IMR-90 (cell line): ENCODE measurements at regions of chr4 and their contacts with region 1.

Region 1: GRCh38 chr4:189124149-189124758 is 816.4 kb upstream of the FRG1 start:
- DNase-seq: peak; percentile 74
- ATAC-seq: peak; percentile 85
- H3K4me3 ChIP-seq: no peak overlapping the region
- H3K27ac ChIP-seq: peak overlapping the region; percentile 43; the same call in 1 of the 2 replicates
- H3K4me1 ChIP-seq: peaks cover 1% of the 10 kb centered on the region; the same call in 1 of the 2 replicates
- H3K27me3 ChIP-seq: no peaks in the 10 kb centered on the region
- CTCF ChIP-seq: peak; percentile 91
- POLR2A ChIP-seq: no peak
- RAD21 ChIP-seq: peak; percentile 97

Region 2: GRCh38 chr4:188767496-188767895 is 356.8 kb before region 1 on chr4:
- CTCF ChIA-PET with region 1: no interaction called
- POLR2A ChIA-PET with region 1: no interaction called
- dilution Hi-C with region 1: no loop called
- in situ Hi-C with region 1: no loop called
- intact Hi-C with region 1: no loop called
- DNase-seq: peak; percentile 34
- ATAC-seq: no peak
- H3K4me3 ChIP-seq: no peak overlapping the region
- H3K27ac ChIP-seq: no peak overlapping the region
- H3K4me1 ChIP-seq: no peaks in the 10 kb centered on the region
- H3K27me3 ChIP-seq: no peaks in the 10 kb centered on the region
- CTCF ChIP-seq: no peak
- POLR2A ChIP-seq: no peak
- RAD21 ChIP-seq: no peak

Region 3: DNA sequence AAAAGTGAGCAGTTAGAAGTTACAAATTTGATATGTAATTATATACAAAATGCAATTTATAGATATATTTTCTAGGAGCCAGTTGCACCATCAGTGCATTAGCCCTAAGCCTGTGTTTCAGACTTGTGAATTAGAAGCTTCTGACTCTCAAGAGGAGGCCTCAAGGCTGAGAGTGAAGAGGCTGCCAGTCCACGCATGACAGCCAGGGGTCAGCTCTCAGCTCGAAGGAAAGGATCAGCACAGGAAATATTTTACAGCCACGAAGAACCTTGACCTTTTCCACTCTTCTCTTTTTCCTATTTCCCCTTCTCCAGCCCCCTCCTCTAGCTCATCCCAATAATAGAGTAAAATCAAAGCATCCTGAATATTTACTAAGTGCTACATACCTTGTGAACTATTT is 342.6 kb before region 1 on chr4:
- CTCF ChIA-PET with region 1: interaction called, 4 read pairs
- POLR2A ChIA-PET with region 1: no interaction called
- dilution Hi-C with region 1: no loop called
- in situ Hi-C with region 1: no loop called
- intact Hi-C with region 1: loop called (anchors 2 kb)
- DNase-seq: peak; percentile 16
- ATAC-seq: peak; percentile 33; the same call in 1 of the 2 replicates
- H3K4me3 ChIP-seq: no peak overlapping the region
- H3K27ac ChIP-seq: no peak overlapping the region
- H3K4me1 ChIP-seq: peaks cover 5% of the 10 kb centered on the region; the same call in 1 of the 2 replicates
- H3K27me3 ChIP-seq: no peaks in the 10 kb centered on the region
- CTCF ChIP-seq: peak; percentile 37
- POLR2A ChIP-seq: no peak
- RAD21 ChIP-seq: 0 out of 2 replicates have a peak, but pooled peaks have one; percentile 14

Region 4: DNA sequence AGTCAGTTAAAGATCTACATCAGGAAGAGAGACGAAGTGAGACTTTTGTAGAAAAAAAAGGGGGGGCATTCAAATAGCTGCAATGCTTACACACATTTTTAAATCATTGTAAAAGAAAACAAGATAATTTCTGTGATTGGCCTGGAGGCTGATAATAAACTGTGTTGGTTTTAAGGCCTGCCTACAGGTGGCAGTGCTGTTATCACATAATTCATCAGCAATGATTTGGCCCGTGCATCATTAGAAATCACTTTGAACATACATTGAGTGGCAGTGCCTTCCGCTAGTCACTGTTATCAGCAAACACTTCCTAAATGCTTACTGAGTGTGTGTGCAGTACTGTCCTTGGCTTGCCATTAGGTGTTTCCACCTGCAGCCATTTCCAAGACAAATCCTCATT is 153.1 kb before region 1 on chr4:
- CTCF ChIA-PET with region 1: interaction called, 5 read pairs
- POLR2A ChIA-PET with region 1: no interaction called
- dilution Hi-C with region 1: no loop called
- in situ Hi-C with region 1: no loop called
- intact Hi-C with region 1: loop called (anchors 2 kb)
- DNase-seq: peak; percentile 28
- ATAC-seq: peak; percentile 70
- H3K4me3 ChIP-seq: no peak overlapping the region
- H3K27ac ChIP-seq: no peak overlapping the region
- H3K4me1 ChIP-seq: peaks cover 3% of the 10 kb centered on the region; the same call in 1 of the 2 replicates
- H3K27me3 ChIP-seq: no peaks in the 10 kb centered on the region
- CTCF ChIP-seq: peak; percentile 53
- POLR2A ChIP-seq: no peak
- RAD21 ChIP-seq: peak; percentile 54

Region 5: GRCh38 chr4:189029976-189030504 is 94.2 kb before region 1 on chr4:
- CTCF ChIA-PET with region 1: no interaction called
- POLR2A ChIA-PET with region 1: no interaction called
- dilution Hi-C with region 1: no loop called
- in situ Hi-C with region 1: no loop called
- intact Hi-C with region 1: no loop called
- DNase-seq: no peak
- ATAC-seq: no peak
- H3K4me3 ChIP-seq: no peak overlapping the region
- H3K27ac ChIP-seq: no peak overlapping the region
- H3K4me1 ChIP-seq: no peaks in the 10 kb centered on the region
- H3K27me3 ChIP-seq: no peaks in the 10 kb centered on the region
- CTCF ChIP-seq: no peak
- POLR2A ChIP-seq: no peak
- RAD21 ChIP-seq: no peak

Region 6: GRCh38 chr4:189073739-189074138 is 50.5 kb before region 1 on chr4:
- CTCF ChIA-PET with region 1: no interaction called
- POLR2A ChIA-PET with region 1: no interaction called
- dilution Hi-C with region 1: no loop called
- in situ Hi-C with region 1: no loop called
- intact Hi-C with region 1: no loop called
- DNase-seq: no peak
- ATAC-seq: no peak
- H3K4me3 ChIP-seq: no peak overlapping the region
- H3K27ac ChIP-seq: no peak overlapping the region
- H3K4me1 ChIP-seq: peaks cover 4% of the 10 kb centered on the region; the same call in 1 of the 2 replicates
- H3K27me3 ChIP-seq: no peaks in the 10 kb centered on the region
- CTCF ChIP-seq: no peak
- POLR2A ChIP-seq: no peak
- RAD21 ChIP-seq: no peak

Region 7: DNA sequence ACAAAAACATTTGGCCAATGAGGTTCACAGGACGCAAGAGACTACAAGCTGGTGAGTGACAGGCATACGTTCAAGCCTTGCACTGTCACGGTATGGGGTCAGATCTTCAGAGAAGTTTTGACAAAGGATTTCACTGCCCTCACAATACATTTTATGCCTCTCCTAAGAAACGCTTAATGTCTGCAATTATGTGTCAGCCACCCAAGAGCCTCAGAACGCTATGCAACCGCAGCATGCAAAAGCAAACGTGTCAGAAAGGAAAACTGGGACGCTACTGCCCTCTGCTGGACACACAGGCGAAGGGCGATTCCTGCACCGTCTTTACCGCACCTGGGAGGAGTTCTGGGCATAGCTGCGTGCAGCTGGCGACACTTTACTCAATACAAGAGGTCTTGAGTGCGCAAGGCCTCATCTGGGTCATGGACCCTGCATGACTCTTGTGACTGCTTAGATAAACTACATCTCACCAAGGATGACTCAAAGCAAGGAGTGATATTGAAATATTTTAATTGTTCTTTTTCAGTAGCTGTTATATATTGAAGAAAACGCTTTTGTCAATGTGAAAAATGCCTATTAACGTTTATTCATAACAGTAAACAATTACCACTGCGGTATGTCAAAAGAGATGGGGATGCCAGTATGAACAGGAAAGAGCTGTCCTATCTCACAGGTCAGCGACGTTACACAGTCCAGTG is 668.8 kb after region 1 on chr4:
- CTCF ChIA-PET with region 1: no interaction called
- POLR2A ChIA-PET with region 1: no interaction called
- dilution Hi-C with region 1: no loop called
- in situ Hi-C with region 1: no loop called
- intact Hi-C with region 1: loop called (anchors 10 kb)
- DNase-seq: peak; percentile 65
- ATAC-seq: peak; percentile 100
- H3K4me3 ChIP-seq: no peak overlapping the region
- H3K27ac ChIP-seq: no peak overlapping the region
- H3K4me1 ChIP-seq: no peaks in the 10 kb centered on the region
- H3K27me3 ChIP-seq: no peaks in the 10 kb centered on the region
- CTCF ChIP-seq: peak; percentile 76
- POLR2A ChIP-seq: no peak
- RAD21 ChIP-seq: peak; percentile 83